Activated CD8-positive, alpha-beta T cell treated with anti-CD3 and anti-CD28 coated beads, Interleukin-2, amount 10 ng/mL, durations not matched to agents 7 days and 5 days (primary cell): ENCODE measurements at regions of chr9 and their contacts with region 1.

Region 1: DNA sequence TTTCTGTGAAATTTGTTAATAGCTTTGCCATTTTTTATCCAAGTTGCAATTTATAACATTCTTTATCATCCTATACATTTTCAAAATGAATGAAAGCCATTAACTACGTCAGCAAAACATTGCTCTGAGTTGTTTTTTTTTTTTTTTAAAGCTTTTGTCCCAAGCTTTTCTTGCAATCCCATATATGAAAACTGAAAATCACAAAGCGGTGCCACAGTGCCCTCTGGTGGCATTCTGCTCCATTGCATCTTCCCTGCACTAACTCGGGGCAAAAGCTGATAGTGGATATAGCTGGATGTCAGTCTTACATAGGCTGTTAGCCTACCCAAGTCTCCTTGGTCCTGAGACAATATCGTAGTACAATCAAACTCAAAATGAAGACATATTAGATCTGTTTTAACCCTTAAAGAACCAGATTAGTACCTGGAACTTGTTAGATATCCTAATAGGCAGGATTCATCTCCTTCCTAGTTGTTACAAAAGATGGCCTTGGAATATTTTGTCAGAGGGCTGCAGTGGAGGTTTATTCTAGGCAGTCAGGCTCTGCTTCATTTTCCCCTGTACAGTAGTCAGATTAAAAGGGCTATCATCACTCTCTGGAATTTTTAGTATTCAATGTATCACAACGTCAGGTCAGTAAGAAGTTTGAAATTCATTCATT is 669.9 kb downstream of the PTPRD start:
- DNase-seq: peak; percentile 59
- ATAC-seq: no peak
- H3K4me3 Mint-ChIP-seq: no peak overlapping the region
- H3K27ac Mint-ChIP-seq: no peak overlapping the region
- H3K4me1 Mint-ChIP-seq: no peaks in the 10 kb centered on the region
- H3K27me3 Mint-ChIP-seq: no peaks in the 10 kb centered on the region

Region 2: DNA sequence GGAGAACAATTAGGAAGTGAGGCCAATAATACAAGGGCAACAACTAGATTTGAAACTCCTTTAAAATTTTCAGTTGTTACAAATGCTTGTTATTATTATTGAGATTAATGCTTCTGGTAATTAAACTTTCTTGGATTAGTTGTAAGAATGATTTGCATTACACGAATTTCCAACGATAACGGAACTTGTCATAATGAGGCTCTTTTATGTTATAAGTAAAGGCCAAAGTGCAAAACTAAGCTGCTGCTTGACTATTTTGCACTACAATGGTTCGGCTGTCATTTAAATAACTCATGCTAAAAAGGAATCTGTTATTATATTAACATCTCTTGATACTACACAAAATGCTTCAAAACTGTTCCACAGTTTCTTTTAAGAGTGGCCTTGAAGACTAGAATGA is 337.2 kb before region 1 on chr9:
- CTCF ChIA-PET with region 1: interaction called, 14 read pairs
- POLR2A ChIA-PET with region 1: no interaction called
- DNase-seq: no peak
- ATAC-seq: no peak
- H3K4me3 Mint-ChIP-seq: no peak overlapping the region
- H3K27ac Mint-ChIP-seq: no peak overlapping the region
- H3K4me1 Mint-ChIP-seq: no peaks in the 10 kb centered on the region
- H3K27me3 Mint-ChIP-seq: no peaks in the 10 kb centered on the region

Region 3: DNA sequence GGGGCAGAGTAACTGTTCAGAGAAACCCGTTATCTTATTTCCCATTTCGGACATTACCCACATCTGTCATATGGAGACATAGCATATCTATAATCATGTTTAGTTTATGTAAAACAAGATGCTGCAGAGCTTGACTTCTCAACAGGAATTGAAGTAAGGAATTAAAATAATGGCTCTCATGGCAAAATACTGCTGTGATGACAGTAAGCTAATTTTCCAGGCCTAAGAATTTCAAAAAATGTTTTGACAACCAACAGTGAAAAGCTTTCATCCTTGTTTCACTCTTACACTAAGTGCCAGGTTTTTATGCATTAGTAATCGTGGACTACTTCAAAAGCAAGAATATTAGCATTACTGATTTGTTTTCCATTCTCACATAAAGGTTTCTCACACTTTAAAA is 151.7 kb after region 1 on chr9:
- CTCF ChIA-PET with region 1: no interaction called
- POLR2A ChIA-PET with region 1: no interaction called
- DNase-seq: no peak
- ATAC-seq: no peak
- H3K4me3 Mint-ChIP-seq: no peak overlapping the region
- H3K27ac Mint-ChIP-seq: no peak overlapping the region
- H3K4me1 Mint-ChIP-seq: no peaks in the 10 kb centered on the region
- H3K27me3 Mint-ChIP-seq: no peaks in the 10 kb centered on the region